Kidney (tissue), 22 donors: ENCODE measurements at regions of chr3 and their contacts with region 1.

Region 1: DNA sequence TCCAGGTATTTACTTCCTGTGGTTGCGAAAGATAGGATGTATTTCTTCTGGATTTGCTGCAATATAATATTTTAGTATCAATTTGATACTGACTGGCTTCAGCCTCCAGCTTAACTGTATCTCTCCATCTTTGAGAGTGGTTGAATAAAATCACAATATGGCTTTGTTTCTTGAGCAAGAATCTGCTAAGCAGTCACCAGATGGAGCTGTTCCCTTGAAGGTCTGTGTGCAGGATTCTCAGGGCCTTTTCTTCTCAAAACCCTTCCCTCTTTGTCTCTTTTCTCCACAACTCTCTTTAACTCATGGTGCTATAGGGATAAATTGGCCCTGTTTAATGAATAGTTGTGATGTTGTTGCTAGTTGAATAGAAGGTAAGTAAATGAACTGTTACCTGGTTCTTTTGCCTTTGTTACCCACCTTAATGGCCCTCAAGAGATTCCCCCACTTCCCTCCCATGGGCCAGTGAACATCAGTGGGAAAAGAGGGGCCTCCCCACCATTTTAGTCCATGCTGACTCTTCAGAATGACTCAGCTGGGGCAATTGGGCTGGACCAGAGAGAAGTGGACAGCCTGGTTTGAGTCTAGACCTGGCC is 34.8 kb upstream of the RAB6B start:
- DNase-seq: peak in 3 of 5 donors; percentile 33 to 90 (median 82)
- H3K4me3 ChIP-seq: no peak overlapping the region
- H3K27ac ChIP-seq: no peak overlapping the region
- H3K4me1 ChIP-seq: peaks cover 0 to 3% (median 3%) of the 10 kb centered on the region in 3 donors
- H3K27me3 ChIP-seq: no peaks in the 10 kb centered on the region
- CTCF ChIP-seq: peak; percentile 80

Region 2: DNA sequence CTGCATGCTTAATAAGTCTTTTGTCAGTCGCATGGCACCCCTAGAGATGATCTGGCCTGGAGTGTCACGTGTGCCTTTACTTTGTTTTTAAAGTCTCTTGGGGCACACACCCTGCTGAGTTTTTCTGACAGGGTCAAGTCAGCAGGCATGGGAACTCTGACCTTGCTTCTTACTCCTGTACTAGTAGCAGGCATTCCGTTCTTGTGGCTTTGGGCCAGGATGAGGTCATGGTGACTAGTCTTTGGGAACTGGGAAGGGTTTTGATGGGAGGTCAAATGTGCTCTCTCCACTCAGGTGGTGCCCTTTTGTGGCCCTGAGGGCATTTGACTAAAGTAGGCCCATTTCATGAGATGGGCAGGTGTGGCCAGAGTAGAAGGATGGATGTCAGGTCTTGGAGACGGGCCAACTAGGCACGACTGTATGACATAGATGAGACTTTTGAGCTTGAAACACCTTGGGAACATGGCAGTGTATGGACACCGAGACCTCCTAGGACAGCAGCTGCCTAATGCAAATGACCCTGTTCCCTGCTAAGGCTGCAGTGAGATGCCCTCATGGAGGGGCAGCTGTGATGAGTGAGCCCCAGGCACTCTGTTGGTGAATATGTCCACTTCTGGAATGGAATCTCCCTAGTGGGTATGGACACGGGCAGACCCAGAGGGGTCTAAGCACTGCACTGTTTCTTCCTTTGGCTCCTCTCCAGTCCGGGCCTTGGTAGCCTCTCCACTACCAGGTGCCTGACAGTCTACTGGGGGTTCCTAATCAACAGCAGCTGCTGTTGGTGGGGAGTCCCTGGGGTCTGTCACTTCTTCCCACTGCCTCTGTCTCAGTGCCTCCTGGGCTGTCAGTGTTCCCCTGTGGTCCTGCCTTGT is 108.4 kb before region 1 on chr3:
- intact Hi-C with region 1: loop called (anchors 5 kb)
- DNase-seq: peak in 2 of 5 donors; percentile 1 to 27
- H3K4me3 ChIP-seq: no peak overlapping the region
- H3K27ac ChIP-seq: no peak overlapping the region
- H3K4me1 ChIP-seq: peaks cover 0 to 6% (median 0%) of the 10 kb centered on the region in 3 donors
- H3K27me3 ChIP-seq: no peaks in the 10 kb centered on the region
- CTCF ChIP-seq: peak; percentile 19

Region 3: GRCh38 chr3:133865136-133865855 is 65.1 kb before region 1 on chr3:
- intact Hi-C with region 1: no loop called
- DNase-seq: peak in 2 of 5 donors; percentile 7 to 12
- H3K4me3 ChIP-seq: no peak overlapping the region
- H3K27ac ChIP-seq: no peak overlapping the region
- H3K4me1 ChIP-seq: peaks cover 0 to 2% (median 0%) of the 10 kb centered on the region in 3 donors
- H3K27me3 ChIP-seq: no peaks in the 10 kb centered on the region
- CTCF ChIP-seq: no peak